Endothelial cell of umbilical vein (primary cell): ENCODE measurements at regions of chr2 and their contacts with region 1.

Region 1: GRCh38 chr2:163155279-163155883 is 316.8 kb upstream of the KCNH7 start:
- DNase-seq: peak; percentile 59
- H3K4me3 ChIP-seq: no peak overlapping the region
- H3K27ac ChIP-seq: no peak overlapping the region
- H3K4me1 ChIP-seq: peaks cover 25% of the 10 kb centered on the region
- H3K27me3 ChIP-seq: no peaks in the 10 kb centered on the region
- CTCF ChIP-seq: peak; percentile 32 to 34
- POLR2A ChIP-seq: no peak

Region 2: DNA sequence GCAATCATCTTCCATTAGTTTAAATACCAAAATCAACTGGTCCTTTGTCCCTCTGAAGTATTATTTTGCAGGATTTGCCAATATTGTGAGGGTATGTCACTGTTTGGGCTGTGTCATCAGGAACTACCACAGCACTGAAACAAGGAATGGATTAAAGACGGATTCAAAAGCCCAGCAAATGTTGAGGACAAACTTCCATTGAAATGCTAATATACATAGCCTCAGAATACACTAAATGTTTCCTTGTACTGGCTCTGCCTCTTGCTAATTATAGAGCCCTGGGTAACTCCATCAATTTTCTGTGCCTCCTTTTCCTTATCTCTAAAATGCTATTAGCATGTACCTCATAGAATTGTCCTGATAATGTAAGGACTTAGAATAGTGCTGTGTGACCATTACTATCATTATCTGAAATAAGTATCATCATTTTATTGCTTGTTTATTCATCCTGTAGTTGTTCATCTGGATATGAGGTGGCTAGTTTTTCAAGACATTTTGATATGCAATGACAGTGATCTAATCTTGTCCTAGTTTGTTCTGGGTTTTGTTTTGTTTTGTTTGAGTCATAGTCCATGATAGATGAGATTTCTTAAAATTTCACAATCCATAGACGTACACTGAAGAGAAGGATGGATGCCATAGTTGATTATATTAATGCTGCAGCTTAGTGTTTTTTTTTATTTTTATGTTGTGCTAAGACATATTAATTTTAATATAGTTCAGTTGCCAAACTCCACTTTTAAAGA is 16.6 kb after region 1 on chr2:
- CTCF ChIA-PET with region 1: interaction called, 13 read pairs
- POLR2A ChIA-PET with region 1: no interaction called
- dilution Hi-C with region 1: no loop called
- intact Hi-C with region 1: no loop called
- DNase-seq: no peak
- H3K4me3 ChIP-seq: no peak overlapping the region
- H3K27ac ChIP-seq: no peak overlapping the region
- H3K4me1 ChIP-seq: no peaks in the 10 kb centered on the region
- H3K27me3 ChIP-seq: no peaks in the 10 kb centered on the region
- CTCF ChIP-seq: no peak
- POLR2A ChIP-seq: no peak

Region 3: DNA sequence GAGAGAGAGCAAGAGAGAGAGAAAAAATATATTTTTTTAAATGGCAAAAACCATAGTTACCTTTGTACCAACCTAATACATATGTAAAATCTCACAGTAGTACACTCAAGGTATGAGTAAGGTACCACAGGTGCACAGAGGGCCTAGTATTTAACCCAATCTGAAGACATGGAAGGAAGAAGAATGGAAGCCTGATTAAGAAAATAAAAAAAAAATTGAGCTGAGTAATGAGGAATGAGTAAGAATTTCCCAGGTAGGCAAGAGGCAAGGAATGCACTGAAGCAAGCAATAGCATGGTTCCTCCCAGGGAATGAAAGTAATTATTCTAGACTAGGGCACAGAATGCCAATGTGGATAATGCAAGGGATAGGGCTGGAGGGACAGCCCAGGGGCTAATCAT is 286.2 kb after region 1 on chr2:
- CTCF ChIA-PET with region 1: no interaction called
- POLR2A ChIA-PET with region 1: no interaction called
- dilution Hi-C with region 1: no loop called
- intact Hi-C with region 1: no loop called
- DNase-seq: no peak
- H3K4me3 ChIP-seq: no peak overlapping the region
- H3K27ac ChIP-seq: no peak overlapping the region
- H3K4me1 ChIP-seq: no peaks in the 10 kb centered on the region
- H3K27me3 ChIP-seq: no peaks in the 10 kb centered on the region
- CTCF ChIP-seq: no peak
- POLR2A ChIP-seq: no peak

Region 4: DNA sequence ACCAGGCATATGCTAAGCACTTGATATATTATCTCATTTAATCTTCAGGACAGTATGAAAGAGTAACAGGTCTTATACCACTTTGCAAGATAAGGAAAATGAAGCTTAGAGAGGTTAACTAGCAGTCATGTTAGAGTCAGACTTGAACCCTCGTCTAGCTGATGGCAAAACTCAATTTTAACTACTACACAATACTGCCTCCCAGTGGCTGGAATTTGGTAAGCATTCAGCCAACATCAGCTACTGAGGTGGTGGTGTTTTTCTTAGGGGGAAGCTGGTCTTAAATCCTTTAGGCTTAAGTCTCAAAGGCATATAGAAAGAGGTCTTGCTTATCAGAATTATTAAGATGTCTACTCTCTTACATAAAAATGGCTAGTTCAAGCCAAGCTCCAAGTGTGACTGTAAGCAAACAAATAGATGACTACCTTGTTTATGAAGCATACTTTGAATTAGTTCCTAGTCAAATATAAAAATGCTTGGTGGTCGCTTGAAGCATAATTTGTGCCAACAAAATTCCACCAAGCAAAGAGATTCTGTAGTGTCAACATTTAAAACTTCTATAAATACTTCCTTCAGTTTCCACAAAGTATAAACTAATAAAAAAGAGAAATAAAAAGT is 905.9 kb after region 1 on chr2:
- CTCF ChIA-PET with region 1: interaction called, 9 read pairs
- POLR2A ChIA-PET with region 1: no interaction called
- dilution Hi-C with region 1: no loop called
- intact Hi-C with region 1: loop called (anchors 1 kb)
- DNase-seq: peak; percentile 61
- H3K4me3 ChIP-seq: no peak overlapping the region
- H3K27ac ChIP-seq: no peak overlapping the region
- H3K4me1 ChIP-seq: no peaks in the 10 kb centered on the region
- H3K27me3 ChIP-seq: no peaks in the 10 kb centered on the region
- CTCF ChIP-seq: peak; percentile 53 to 58
- POLR2A ChIP-seq: no peak

Region 5: GRCh38 chr2:164430166-164430783 is 1274.9 kb after region 1 on chr2:
- CTCF ChIA-PET with region 1: interaction called, 20 read pairs
- POLR2A ChIA-PET with region 1: no interaction called
- dilution Hi-C with region 1: no loop called
- intact Hi-C with region 1: loop called (anchors 1 kb)
- DNase-seq: peak; percentile 60
- H3K4me3 ChIP-seq: no peak overlapping the region
- H3K27ac ChIP-seq: no peak overlapping the region
- H3K4me1 ChIP-seq: no peaks in the 10 kb centered on the region
- H3K27me3 ChIP-seq: no peaks in the 10 kb centered on the region
- CTCF ChIP-seq: peak; percentile 48 to 57
- POLR2A ChIP-seq: no peak

Region 6: DNA sequence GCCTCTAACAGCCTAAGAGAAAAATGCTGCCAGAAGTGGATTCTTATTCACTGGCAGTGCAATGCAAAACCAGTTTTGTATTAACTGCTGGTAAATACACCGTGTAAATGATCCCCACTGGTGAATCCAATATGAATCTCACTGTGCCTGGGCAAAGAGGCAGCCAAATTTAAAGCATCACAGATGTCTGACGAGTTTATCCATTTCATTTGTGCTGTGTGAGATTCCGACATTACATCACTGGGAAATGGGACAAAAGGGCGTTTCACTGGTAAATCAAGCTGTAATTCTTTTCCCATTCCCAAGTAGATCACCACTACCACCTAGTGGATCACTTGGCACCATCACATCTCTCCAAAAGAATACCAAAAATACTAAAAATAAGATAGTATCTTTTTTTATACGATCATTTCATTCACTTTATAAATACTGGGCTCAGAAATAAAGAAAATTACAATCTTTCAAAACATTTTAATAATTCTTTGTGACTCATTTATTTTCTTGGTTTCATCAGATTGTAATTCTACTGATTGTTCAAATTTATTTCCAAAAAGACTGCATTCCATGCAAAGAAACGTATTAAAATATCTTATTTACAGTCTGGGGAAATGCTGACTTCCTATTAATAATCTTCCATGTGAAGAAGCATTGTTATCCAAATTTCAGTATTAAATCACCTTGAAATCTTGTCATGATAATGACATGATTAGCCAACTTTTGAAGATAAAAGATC is 1340.3 kb after region 1 on chr2:
- CTCF ChIA-PET with region 1: interaction called, 13 read pairs
- POLR2A ChIA-PET with region 1: no interaction called
- dilution Hi-C with region 1: no loop called
- intact Hi-C with region 1: loop called (anchors 1 kb)
- DNase-seq: peak; percentile 44
- H3K4me3 ChIP-seq: no peak overlapping the region
- H3K27ac ChIP-seq: no peak overlapping the region
- H3K4me1 ChIP-seq: peaks cover 7% of the 10 kb centered on the region
- H3K27me3 ChIP-seq: no peaks in the 10 kb centered on the region
- CTCF ChIP-seq: peak; percentile 34 to 41
- POLR2A ChIP-seq: no peak

Region 7: GRCh38 chr2:164599966-164600589 is 1444.7 kb after region 1 on chr2:
- CTCF ChIA-PET with region 1: interaction called, 8 read pairs
- POLR2A ChIA-PET with region 1: no interaction called
- dilution Hi-C with region 1: no loop called
- intact Hi-C with region 1: loop called (anchors 5 kb)
- DNase-seq: peak; percentile 91
- H3K4me3 ChIP-seq: no peak overlapping the region
- H3K27ac ChIP-seq: peak overlapping the region; percentile 31
- H3K4me1 ChIP-seq: peaks cover 20% of the 10 kb centered on the region
- H3K27me3 ChIP-seq: no peaks in the 10 kb centered on the region
- CTCF ChIP-seq: peak; percentile 77 to 86
- POLR2A ChIP-seq: no peak